B cell (primary cell): ENCODE measurements at regions of chr6 and their contacts with region 1.

Region 1: GRCh38 chr6:31958741-31959739 is at the starts of genes NELFE and SKIC2:
- DNase-seq: peak; percentile 99
- ATAC-seq: peak; percentile 98
- H3K4me3 ChIP-seq: peak within 1 kb of the TSS; percentile 88 to 98 (median 91)
- H3K4me3 Mint-ChIP-seq: peak within 1 kb of the TSS; percentile 96
- H3K27ac ChIP-seq: peak within 1 kb of the TSS; percentile 84 to 91
- H3K27ac Mint-ChIP-seq: peak within 1 kb of the TSS; percentile 96
- H3K4me1 ChIP-seq: peaks cover 16 to 23% of the 10 kb centered on the region in 2 donors
- H3K4me1 Mint-ChIP-seq: peaks cover 30% of the 10 kb centered on the region
- H3K27me3 ChIP-seq: no peaks in the 10 kb centered on the region
- H3K27me3 Mint-ChIP-seq: no peaks in the 10 kb centered on the region
- CTCF ChIP-seq: no peak
- total RNA-seq, gene NELFE: 48.6 and 53.7 TPM in 2 replicates
- total RNA-seq, gene SKIC2: 119 and 122 TPM in 2 replicates

Region 2: GRCh38 chr6:31403283-31403989 is 555.6 kb before region 1 on chr6 and contains the start of gene MICA:
- CTCF ChIA-PET with region 1: no interaction called
- POLR2A ChIA-PET with region 1: no interaction called
- intact Hi-C with region 1: loop called (anchors 5 kb)
- DNase-seq: peak; percentile 75
- ATAC-seq: peak; percentile 64
- H3K4me3 ChIP-seq: peak within 1 kb of the TSS; percentile 12 to 72 (median 64)
- H3K4me3 Mint-ChIP-seq: peak within 1 kb of the TSS; percentile 90
- H3K27ac ChIP-seq: peak within 1 kb of the TSS; percentile 12 to 82
- H3K27ac Mint-ChIP-seq: peak within 1 kb of the TSS; percentile 75
- H3K4me1 ChIP-seq: peaks cover 30 to 44% of the 10 kb centered on the region in 2 donors
- H3K4me1 Mint-ChIP-seq: peaks cover 64% of the 10 kb centered on the region
- H3K27me3 ChIP-seq: no peaks in the 10 kb centered on the region
- H3K27me3 Mint-ChIP-seq: no peaks in the 10 kb centered on the region
- CTCF ChIP-seq: no peak
- total RNA-seq, gene MICA: 13.9 and 17.1 TPM in 2 replicates

Region 3: GRCh38 chr6:31541658-31542521 is 417.1 kb before region 1 on chr6 and contains the start of gene DDX39B:
- CTCF ChIA-PET with region 1: no interaction called
- POLR2A ChIA-PET with region 1: no interaction called
- intact Hi-C with region 1: loop called (anchors 1 kb)
- DNase-seq: peak; percentile 97
- ATAC-seq: peak; percentile 72
- H3K4me3 ChIP-seq: peak within 1 kb of the TSS; percentile 79 to 100 (median 97)
- H3K4me3 Mint-ChIP-seq: peak within 1 kb of the TSS; percentile 99
- H3K27ac ChIP-seq: peak within 1 kb of the TSS; percentile 97 to 99
- H3K27ac Mint-ChIP-seq: peak within 1 kb of the TSS; percentile 93
- H3K4me1 ChIP-seq: peaks cover 37 to 43% of the 10 kb centered on the region in 2 donors
- H3K4me1 Mint-ChIP-seq: peaks cover 50% of the 10 kb centered on the region
- H3K27me3 ChIP-seq: no peaks in the 10 kb centered on the region
- H3K27me3 Mint-ChIP-seq: no peaks in the 10 kb centered on the region
- CTCF ChIP-seq: no peak
- total RNA-seq, gene DDX39B: 576 and 577 TPM in 2 replicates

Region 4: GRCh38 chr6:31717499-31718222 is 241.4 kb before region 1 on chr6:
- CTCF ChIA-PET with region 1: no interaction called
- POLR2A ChIA-PET with region 1: no interaction called
- intact Hi-C with region 1: no loop called
- DNase-seq: no peak
- ATAC-seq: no peak
- H3K4me3 ChIP-seq: no peak overlapping the region
- H3K4me3 Mint-ChIP-seq: no peak overlapping the region
- H3K27ac ChIP-seq: no peak overlapping the region
- H3K27ac Mint-ChIP-seq: no peak overlapping the region
- H3K4me1 ChIP-seq: no peaks in the 10 kb centered on the region
- H3K4me1 Mint-ChIP-seq: peaks cover 1% of the 10 kb centered on the region
- H3K27me3 ChIP-seq: no peaks in the 10 kb centered on the region
- H3K27me3 Mint-ChIP-seq: peaks cover 1% of the 10 kb centered on the region
- CTCF ChIP-seq: no peak

Region 5: GRCh38 chr6:31901953-31902643 is 56.9 kb before region 1 on chr6 and contains the start of gene ZBTB12:
- CTCF ChIA-PET with region 1: no interaction called
- POLR2A ChIA-PET with region 1: interaction called, 8 read pairs
- intact Hi-C with region 1: loop called (anchors 1 kb)
- DNase-seq: peak; percentile 93
- ATAC-seq: peak; percentile 64
- H3K4me3 ChIP-seq: peak within 1 kb of the TSS; percentile 27 to 82 (median 77)
- H3K4me3 Mint-ChIP-seq: peak within 1 kb of the TSS; percentile 94
- H3K27ac ChIP-seq: peak within 1 kb of the TSS; percentile 76 to 79
- H3K27ac Mint-ChIP-seq: peak within 1 kb of the TSS; percentile 93
- H3K4me1 ChIP-seq: peaks cover 13 to 23% of the 10 kb centered on the region in 2 donors
- H3K4me1 Mint-ChIP-seq: peaks cover 32% of the 10 kb centered on the region
- H3K27me3 ChIP-seq: no peaks in the 10 kb centered on the region
- H3K27me3 Mint-ChIP-seq: no peaks in the 10 kb centered on the region
- CTCF ChIP-seq: no peak
- total RNA-seq, gene ZBTB12: 8.1 and 8.9 TPM in 2 replicates

Region 6: DNA sequence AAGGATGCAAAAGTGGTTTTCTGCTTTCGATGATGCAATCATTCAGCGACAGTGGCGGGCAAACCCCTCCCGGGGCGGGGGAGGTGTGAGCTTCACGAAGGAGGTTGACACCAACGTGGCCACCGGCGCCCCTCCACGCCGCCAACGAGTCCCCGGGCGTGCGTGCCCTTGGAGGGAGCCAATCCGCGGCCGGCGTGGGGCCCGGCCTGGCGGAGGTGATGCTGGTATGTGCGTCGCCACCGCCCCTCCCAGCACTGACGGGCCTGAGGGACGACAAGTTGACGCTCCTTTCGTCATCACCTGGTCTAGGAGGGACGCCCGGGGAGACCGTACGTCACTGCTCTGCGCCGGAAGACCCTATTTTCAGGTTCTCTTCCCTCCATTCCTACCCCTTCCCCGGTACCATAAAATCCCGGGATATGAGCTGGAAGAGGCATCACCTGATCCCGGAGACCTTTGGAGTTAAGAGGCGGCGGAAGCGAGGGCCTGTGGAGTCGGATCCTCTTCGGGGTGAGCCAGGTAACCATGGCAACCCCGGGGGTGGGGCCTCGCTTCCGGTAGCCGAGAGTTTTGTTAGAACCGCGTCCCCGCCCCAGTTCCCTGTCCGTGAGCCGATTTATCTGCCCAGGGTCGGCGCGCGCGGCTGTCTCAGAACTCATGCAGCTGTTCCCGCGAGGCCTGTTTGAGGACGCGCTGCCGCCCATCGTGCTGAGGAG is 13.1 kb after region 1 on chr6 and contains the start of gene DXO:
- CTCF ChIA-PET with region 1: interaction called, 10 read pairs
- POLR2A ChIA-PET with region 1: interaction called, 24 read pairs
- intact Hi-C with region 1: loop called (anchors 1 kb)
- DNase-seq: peak; percentile 100
- ATAC-seq: peak; percentile 89
- H3K4me3 ChIP-seq: peak within 1 kb of the TSS; percentile 51 to 92 (median 80)
- H3K4me3 Mint-ChIP-seq: peak within 1 kb of the TSS; percentile 98
- H3K27ac ChIP-seq: peak within 1 kb of the TSS; percentile 96 to 100
- H3K27ac Mint-ChIP-seq: peak within 1 kb of the TSS; percentile 100
- H3K4me1 ChIP-seq: peaks cover 18 to 23% of the 10 kb centered on the region in 2 donors
- H3K4me1 Mint-ChIP-seq: peaks cover 34% of the 10 kb centered on the region
- H3K27me3 ChIP-seq: no peaks in the 10 kb centered on the region
- H3K27me3 Mint-ChIP-seq: no peaks in the 10 kb centered on the region
- CTCF ChIP-seq: no peak
- total RNA-seq, gene DXO: 33.9 and 36.1 TPM in 2 replicates

Region 7: GRCh38 chr6:32060966-32061655 is 102.1 kb after region 1 on chr6:
- CTCF ChIA-PET with region 1: no interaction called
- POLR2A ChIA-PET with region 1: no interaction called
- intact Hi-C with region 1: no loop called
- DNase-seq: no peak
- ATAC-seq: no peak
- H3K4me3 ChIP-seq: no peak overlapping the region
- H3K4me3 Mint-ChIP-seq: no peak overlapping the region
- H3K27ac ChIP-seq: no peak overlapping the region
- H3K27ac Mint-ChIP-seq: no peak overlapping the region
- H3K4me1 ChIP-seq: no peaks in the 10 kb centered on the region
- H3K4me1 Mint-ChIP-seq: no peaks in the 10 kb centered on the region
- H3K27me3 ChIP-seq: no peaks in the 10 kb centered on the region
- H3K27me3 Mint-ChIP-seq: peaks cover 13% of the 10 kb centered on the region
- CTCF ChIP-seq: no peak

Region 8: DNA sequence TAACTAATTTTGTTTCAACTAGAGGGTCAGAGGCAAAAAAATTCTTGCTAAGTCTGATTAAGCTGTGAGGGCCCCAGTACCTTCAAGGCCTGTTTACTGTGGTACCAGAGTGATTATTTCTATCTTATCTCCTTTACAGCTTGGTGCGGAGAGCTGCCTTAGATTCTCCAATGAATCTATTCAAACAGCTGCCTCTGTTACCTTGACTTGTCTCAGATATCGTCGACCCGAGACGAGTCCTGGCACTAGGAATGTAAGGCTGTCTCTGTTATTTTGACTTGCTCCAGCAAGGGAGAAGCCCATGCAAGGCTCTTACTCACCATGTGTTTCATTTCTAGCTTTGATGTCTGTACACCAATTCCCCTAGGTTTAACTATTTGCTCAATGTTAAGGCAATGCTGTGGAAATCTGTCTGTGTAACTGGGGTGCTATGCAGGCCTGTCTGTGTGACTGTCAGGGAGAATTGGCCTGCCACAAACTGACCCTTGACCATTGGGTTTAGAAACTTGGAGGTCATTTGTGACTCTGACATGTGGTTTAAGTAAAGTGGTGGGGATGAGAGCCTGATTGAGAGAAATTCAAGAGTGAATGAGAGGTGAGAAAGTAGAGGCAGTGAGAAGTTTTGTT is 181.5 kb after region 1 on chr6:
- CTCF ChIA-PET with region 1: no interaction called
- POLR2A ChIA-PET with region 1: no interaction called
- intact Hi-C with region 1: no loop called
- DNase-seq: no peak
- ATAC-seq: no peak
- H3K4me3 ChIP-seq: no peak overlapping the region
- H3K4me3 Mint-ChIP-seq: no peak overlapping the region
- H3K27ac ChIP-seq: no peak overlapping the region
- H3K27ac Mint-ChIP-seq: no peak overlapping the region
- H3K4me1 ChIP-seq: no peaks in the 10 kb centered on the region
- H3K4me1 Mint-ChIP-seq: no peaks in the 10 kb centered on the region
- H3K27me3 ChIP-seq: peaks cover 0 to 5% (median 2%) of the 10 kb centered on the region in 4 experiments
- H3K27me3 Mint-ChIP-seq: peaks cover 12% of the 10 kb centered on the region
- CTCF ChIP-seq: no peak

Region 9: DNA sequence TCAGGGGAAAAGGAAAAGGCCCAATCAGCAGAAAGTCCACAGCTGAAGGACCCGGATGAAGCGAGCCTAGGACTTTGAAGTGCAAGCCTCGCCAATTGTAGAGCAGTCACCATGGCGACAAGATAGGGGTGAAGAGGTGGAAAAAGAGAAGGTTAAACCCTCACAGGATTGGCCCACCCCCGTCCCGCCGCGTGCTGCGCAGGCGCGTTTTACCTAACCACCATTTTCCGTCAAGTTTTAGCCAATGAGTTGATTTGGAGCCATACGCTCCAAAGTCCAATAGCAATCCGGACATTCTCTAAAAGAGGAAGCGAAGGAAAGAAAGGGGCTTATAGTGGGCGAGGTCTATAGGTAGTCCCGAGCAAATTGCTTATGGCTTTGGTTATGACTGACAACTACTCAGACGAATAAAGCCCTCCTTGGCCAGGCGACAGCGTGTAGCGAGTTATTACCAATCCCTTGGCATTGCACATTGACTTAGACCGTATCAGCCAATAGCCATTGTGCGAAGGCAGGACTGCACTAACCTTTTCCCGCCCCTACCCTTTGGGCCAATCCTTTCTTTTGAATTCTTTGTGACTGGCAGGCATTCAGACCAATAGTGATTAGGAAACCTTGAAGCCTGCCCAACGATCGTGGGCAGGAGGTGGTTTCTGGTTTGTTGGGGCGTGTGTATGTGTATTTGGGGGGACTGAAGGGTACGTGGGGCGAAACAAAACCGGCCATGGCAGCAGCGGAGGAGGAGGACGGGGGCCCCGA is 218.9 kb after region 1 on chr6 and contains the start of gene RNF5:
- CTCF ChIA-PET with region 1: no interaction called
- POLR2A ChIA-PET with region 1: no interaction called
- intact Hi-C with region 1: loop called (anchors 5 kb)
- DNase-seq: peak; percentile 99
- ATAC-seq: peak; percentile 79
- H3K4me3 ChIP-seq: peak within 1 kb of the TSS; percentile 68 to 92 (median 75)
- H3K4me3 Mint-ChIP-seq: peak within 1 kb of the TSS; percentile 97
- H3K27ac ChIP-seq: peak within 1 kb of the TSS; percentile 97 to 98
- H3K27ac Mint-ChIP-seq: peak within 1 kb of the TSS; percentile 99
- H3K4me1 ChIP-seq: peaks cover 34 to 47% of the 10 kb centered on the region in 2 donors
- H3K4me1 Mint-ChIP-seq: peaks cover 68% of the 10 kb centered on the region
- H3K27me3 ChIP-seq: no peaks in the 10 kb centered on the region
- H3K27me3 Mint-ChIP-seq: no peaks in the 10 kb centered on the region
- CTCF ChIP-seq: no peak
- total RNA-seq, gene RNF5: 39.0 and 40.7 TPM in 2 replicates